Mammary epithelial cell (primary cell): ENCODE measurements at regions of chr13 and their contacts with region 1.

Region 1: DNA sequence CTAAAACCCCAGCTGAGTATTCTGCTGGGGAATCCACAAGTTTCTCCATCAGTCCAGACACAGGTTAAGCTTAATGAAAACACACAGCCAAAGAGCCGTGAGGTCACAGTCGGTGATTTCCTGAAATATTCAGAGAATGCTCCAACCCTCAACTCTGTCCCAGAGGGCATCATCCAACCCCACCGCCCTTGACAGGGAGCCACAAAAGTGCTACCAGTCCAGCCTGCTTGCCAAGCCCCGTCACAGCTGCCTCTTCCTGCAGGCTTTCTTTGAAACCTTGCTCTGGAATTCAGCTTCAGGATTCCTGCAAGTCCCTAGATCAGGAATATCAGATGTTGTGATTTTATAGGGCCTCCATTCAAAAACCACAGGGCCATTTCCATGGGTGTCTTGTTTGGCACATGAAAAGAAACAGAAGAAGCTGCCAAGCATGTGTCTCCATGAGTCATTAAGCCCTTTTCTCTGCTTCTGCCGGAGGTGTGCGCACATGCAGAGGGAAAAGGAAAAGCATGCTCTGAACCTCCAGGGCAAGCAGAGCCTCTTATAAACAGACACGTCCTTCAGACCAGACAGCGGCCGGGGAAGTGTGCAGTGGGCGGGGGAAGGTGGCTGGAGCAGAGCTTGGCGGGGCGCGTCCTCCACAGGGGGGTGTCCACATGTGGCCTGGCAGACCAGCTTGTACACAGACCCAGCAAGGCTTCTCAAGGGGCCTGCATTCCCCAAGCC is 164.7 kb downstream of the KATNAL1 start:
- DNase-seq: peak; percentile 95
- H3K4me3 ChIP-seq: no peak overlapping the region
- H3K27ac ChIP-seq: peak overlapping the region; percentile 40
- H3K4me1 ChIP-seq: peaks cover 24% of the 10 kb centered on the region
- H3K27me3 ChIP-seq: no peaks in the 10 kb centered on the region
- CTCF ChIP-seq: no peak

Region 2: GRCh38 chr13:30212256-30212655 is 69.6 kb after region 1 on chr13:
- CTCF ChIA-PET with region 1: no interaction called
- dilution Hi-C with region 1: no loop called
- in situ Hi-C with region 1: no loop called
- intact Hi-C with region 1: loop called (anchors 5 kb)
- DNase-seq: no peak
- H3K4me3 ChIP-seq: no peak overlapping the region
- H3K27ac ChIP-seq: no peak overlapping the region
- H3K4me1 ChIP-seq: no peaks in the 10 kb centered on the region
- H3K27me3 ChIP-seq: no peaks in the 10 kb centered on the region
- CTCF ChIP-seq: no peak

Region 3: GRCh38 chr13:30341815-30342570 is 199.3 kb after region 1 on chr13:
- CTCF ChIA-PET with region 1: no interaction called
- dilution Hi-C with region 1: no loop called
- in situ Hi-C with region 1: no loop called
- intact Hi-C with region 1: no loop called
- DNase-seq: peak; percentile 89
- H3K4me3 ChIP-seq: no peak overlapping the region
- H3K27ac ChIP-seq: peak overlapping the region; percentile 61
- H3K4me1 ChIP-seq: peaks cover 48% of the 10 kb centered on the region
- H3K27me3 ChIP-seq: no peaks in the 10 kb centered on the region
- CTCF ChIP-seq: no peak